Panc1 (cell line): ENCODE measurements at regions of chr15 and their contacts with region 1.

Region 1: GRCh38 chr15:84706409-84706808 is 9.5 kb downstream of the SEC11A start:
- DNase-seq: no peak
- ATAC-seq: no peak
- H3K4me3 ChIP-seq: no peak overlapping the region
- H3K27ac ChIP-seq: no peak overlapping the region
- H3K4me1 ChIP-seq: no peaks in the 10 kb centered on the region
- H3K27me3 ChIP-seq: no peaks in the 10 kb centered on the region
- CTCF ChIP-seq: no peak

Region 2: DNA sequence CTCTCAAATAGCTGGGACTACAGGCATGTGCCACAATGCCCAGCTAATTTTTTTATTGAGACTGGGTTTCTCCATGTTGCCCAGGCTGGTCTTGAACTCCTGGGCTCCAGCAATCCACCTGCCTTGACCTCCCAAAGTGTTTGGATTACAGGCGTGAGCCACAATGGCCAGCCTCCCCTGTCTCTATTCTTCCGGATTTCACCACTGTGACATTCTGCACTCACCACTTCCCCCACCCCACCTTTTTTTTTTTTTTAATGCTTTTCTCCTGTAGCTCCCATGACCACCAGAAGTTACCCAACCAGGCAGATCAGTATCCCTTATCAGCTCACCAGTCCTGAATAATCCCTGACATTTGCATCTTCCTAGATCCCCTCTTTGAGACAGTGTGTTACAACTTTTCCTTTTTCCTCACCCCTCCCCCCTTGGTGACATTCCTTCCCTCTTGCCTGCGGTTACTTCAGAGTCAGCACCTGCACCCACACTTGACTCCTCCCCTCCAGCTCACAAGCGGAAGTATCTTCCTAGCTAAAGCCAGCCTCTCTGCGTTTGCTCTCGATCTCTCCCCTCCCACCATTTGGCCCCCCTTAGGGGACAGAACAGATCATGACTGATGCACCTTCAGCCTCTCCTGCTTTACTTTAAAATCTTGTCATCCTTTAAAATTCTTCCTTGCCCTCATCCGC is 28.5 kb after region 1 on chr15:
- CTCF ChIA-PET with region 1: no interaction called
- POLR2A ChIA-PET with region 1: no interaction called
- in situ Hi-C with region 1: no loop called
- intact Hi-C with region 1: no loop called
- DNase-seq: no peak
- ATAC-seq: peak; percentile 57
- H3K4me3 ChIP-seq: peak overlapping the region in 1 of 2 experiments; percentile 37; a peak in 2 of 4 replicates
- H3K27ac ChIP-seq: no peak overlapping the region
- H3K4me1 ChIP-seq: peaks cover 6% of the 10 kb centered on the region; the same call in 1 of the 2 replicates
- H3K27me3 ChIP-seq: no peaks in the 10 kb centered on the region
- CTCF ChIP-seq: no peak

Region 3: GRCh38 chr15:84871428-84872305 is 165.3 kb after region 1 on chr15:
- CTCF ChIA-PET with region 1: interaction called, 10 read pairs
- POLR2A ChIA-PET with region 1: no interaction called
- in situ Hi-C with region 1: no loop called
- intact Hi-C with region 1: no loop called
- DNase-seq: no peak
- ATAC-seq: no peak
- H3K4me3 ChIP-seq: no peak overlapping the region
- H3K27ac ChIP-seq: no peak overlapping the region
- H3K4me1 ChIP-seq: no peaks in the 10 kb centered on the region
- H3K27me3 ChIP-seq: no peaks in the 10 kb centered on the region
- CTCF ChIP-seq: no peak

Region 4: DNA sequence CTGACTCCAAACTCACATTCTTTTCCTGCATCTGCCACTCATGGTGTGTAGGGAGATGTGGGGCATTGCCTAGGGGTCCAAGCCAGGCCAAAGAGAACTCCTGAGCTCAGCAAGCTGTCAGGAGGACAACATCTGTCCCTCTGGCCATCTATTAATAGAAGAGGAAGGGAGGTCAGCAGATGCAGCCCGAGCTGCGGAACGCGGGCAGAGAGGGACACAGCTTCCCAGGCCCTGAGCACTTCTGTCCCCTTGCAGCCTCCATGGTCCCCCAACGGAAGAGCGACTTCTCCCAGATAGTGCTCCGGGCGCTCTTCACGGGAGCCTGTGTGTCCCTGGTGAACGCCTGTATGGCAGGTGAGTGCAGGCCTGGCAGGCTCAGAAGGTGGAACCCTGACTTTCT is 237.9 kb after region 1 on chr15:
- CTCF ChIA-PET with region 1: no interaction called
- POLR2A ChIA-PET with region 1: no interaction called
- in situ Hi-C with region 1: no loop called
- intact Hi-C with region 1: no loop called
- DNase-seq: no peak
- ATAC-seq: no peak
- H3K4me3 ChIP-seq: no peak overlapping the region
- H3K27ac ChIP-seq: no peak overlapping the region
- H3K4me1 ChIP-seq: no peaks in the 10 kb centered on the region
- H3K27me3 ChIP-seq: no peaks in the 10 kb centered on the region
- CTCF ChIP-seq: no peak